Naive thymus-derived CD4-positive, alpha-beta T cell (primary cell): ENCODE measurements at regions of chr21 and their contacts with region 1.

Region 1: GRCh38 chr21:36589355-36589971 is 109.5 kb upstream of the SIM2 start:
- DNase-seq: peak in 1 of 9 donors; percentile 25
- ATAC-seq: peak; percentile 41
- H3K4me3 ChIP-seq: no peak overlapping the region
- H3K4me3 Mint-ChIP-seq: no peak overlapping the region
- H3K27ac ChIP-seq: no peak overlapping the region
- H3K27ac Mint-ChIP-seq: peak overlapping the region in 1 of 9 donors; percentile 53
- H3K4me1 ChIP-seq: peaks cover 0 to 3% of the 10 kb centered on the region in 2 donors
- H3K4me1 Mint-ChIP-seq: peaks cover 0 to 17% (median 6%) of the 10 kb centered on the region in 7 donors
- H3K27me3 ChIP-seq: no peaks in the 10 kb centered on the region
- H3K27me3 Mint-ChIP-seq: peaks cover 0 to 9% (median 0%) of the 10 kb centered on the region in 5 donors

Region 2: GRCh38 chr21:36141513-36141925 is 447.9 kb before region 1 on chr21:
- CTCF ChIA-PET with region 1: no interaction called
- POLR2A ChIA-PET with region 1: no interaction called
- intact Hi-C with region 1: loop called in 1 of 2 experiments (anchors 1 kb)
- DNase-seq: peak; percentile 50 to 92 (median 84)
- ATAC-seq: peak; percentile 99
- H3K4me3 ChIP-seq: no peak overlapping the region
- H3K4me3 Mint-ChIP-seq: peak overlapping the region in 5 of 10 donors; percentile 1 to 15 (median 3)
- H3K27ac ChIP-seq: peak overlapping the region; percentile 74
- H3K27ac Mint-ChIP-seq: peak overlapping the region; percentile 16 to 92 (median 83)
- H3K4me1 ChIP-seq: peaks cover 18 to 19% of the 10 kb centered on the region in 2 donors
- H3K4me1 Mint-ChIP-seq: peaks cover 11 to 42% (median 39%) of the 10 kb centered on the region in 7 donors
- H3K27me3 ChIP-seq: no peaks in the 10 kb centered on the region
- H3K27me3 Mint-ChIP-seq: no peaks in the 10 kb centered on the region

Region 3: DNA sequence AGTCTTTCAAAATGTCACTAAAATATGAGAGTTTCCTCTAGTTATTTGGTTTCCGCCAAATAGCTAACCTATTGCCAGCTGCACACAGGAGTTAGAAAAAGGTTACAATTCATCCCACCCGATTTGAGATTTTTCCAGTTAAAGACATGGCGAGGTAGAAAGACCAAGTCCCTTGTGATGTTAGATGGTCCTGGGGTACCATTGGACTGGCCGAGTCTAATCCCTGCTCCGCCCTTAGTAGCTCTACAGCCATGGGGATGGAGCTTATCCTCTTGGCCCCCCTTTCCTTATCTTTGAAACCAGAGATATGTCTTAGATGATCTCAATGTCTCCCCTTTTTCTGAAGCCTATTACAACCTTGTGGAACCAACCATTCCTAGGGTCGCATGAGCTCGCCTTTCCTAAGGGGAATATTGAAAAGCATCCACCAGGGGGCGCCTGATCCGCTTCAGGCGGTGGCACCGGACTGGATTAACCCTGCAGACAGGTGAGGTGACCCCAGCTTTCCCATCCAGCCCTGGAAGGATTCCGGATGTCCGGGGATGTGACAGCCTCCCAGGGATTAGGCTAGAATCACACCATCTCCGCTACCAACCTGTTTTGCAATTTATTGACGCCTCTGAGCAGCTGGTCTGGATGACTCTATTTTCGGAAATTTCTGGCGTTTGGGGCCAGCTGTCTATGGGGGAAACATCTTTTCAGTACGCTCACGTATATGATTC is 41.2 kb after region 1 on chr21:
- CTCF ChIA-PET with region 1: interaction called, 12 read pairs
- POLR2A ChIA-PET with region 1: no interaction called
- intact Hi-C with region 1: loop called in 1 of 2 experiments (anchors 1 kb)
- DNase-seq: peak in 8 of 9 donors; percentile 14 to 57 (median 41)
- ATAC-seq: peak; percentile 54
- H3K4me3 ChIP-seq: no peak overlapping the region
- H3K4me3 Mint-ChIP-seq: no peak overlapping the region
- H3K27ac ChIP-seq: no peak overlapping the region
- H3K27ac Mint-ChIP-seq: no peak overlapping the region
- H3K4me1 ChIP-seq: no peaks in the 10 kb centered on the region
- H3K4me1 Mint-ChIP-seq: no peaks in the 10 kb centered on the region
- H3K27me3 ChIP-seq: no peaks in the 10 kb centered on the region
- H3K27me3 Mint-ChIP-seq: peaks cover 0 to 6% (median 3%) of the 10 kb centered on the region in 5 donors

Region 4: GRCh38 chr21:36706951-36707762 is 117.7 kb after region 1 on chr21:
- CTCF ChIA-PET with region 1: no interaction called
- POLR2A ChIA-PET with region 1: no interaction called
- intact Hi-C with region 1: loop called in 1 of 2 experiments (anchors 2 kb)
- DNase-seq: peak in 1 of 9 donors; percentile 18
- ATAC-seq: no peak
- H3K4me3 ChIP-seq: no peak overlapping the region
- H3K4me3 Mint-ChIP-seq: peak overlapping the region in 9 of 10 donors; percentile 51 to 84 (median 72)
- H3K27ac ChIP-seq: no peak overlapping the region
- H3K27ac Mint-ChIP-seq: no peak overlapping the region
- H3K4me1 ChIP-seq: peaks cover 0 to 31% of the 10 kb centered on the region in 2 donors
- H3K4me1 Mint-ChIP-seq: peaks cover 8 to 61% (median 51%) of the 10 kb centered on the region in 7 donors
- H3K27me3 ChIP-seq: peaks cover 0 to 36% of the 10 kb centered on the region in 2 donors
- H3K27me3 Mint-ChIP-seq: peaks cover 71 to 84% (median 80%) of the 10 kb centered on the region in 5 donors

Region 5: DNA sequence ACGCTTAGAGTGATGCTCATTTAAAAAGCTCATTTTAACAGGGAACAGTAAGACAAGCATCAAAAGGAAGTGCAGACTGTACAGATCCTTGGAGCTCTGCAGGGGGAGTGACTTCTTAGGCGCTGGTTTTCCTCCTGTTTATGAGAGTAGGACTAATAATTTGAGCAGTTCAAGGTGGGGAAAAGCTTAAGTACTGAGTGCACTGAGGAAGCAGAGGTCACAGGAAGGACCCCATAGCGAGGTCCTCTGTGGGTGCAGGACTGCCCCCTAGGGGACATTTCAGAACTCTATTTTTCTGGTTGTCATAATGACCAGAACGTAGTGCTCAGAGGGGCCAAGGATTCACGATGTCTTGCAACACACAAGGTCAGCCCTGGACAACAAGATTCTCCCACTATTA is 264.9 kb after region 1 on chr21:
- CTCF ChIA-PET with region 1: no interaction called
- POLR2A ChIA-PET with region 1: interaction called, 3 read pairs
- intact Hi-C with region 1: loop called in 1 of 2 experiments (anchors 1 kb)
- DNase-seq: peak in 3 of 9 donors; percentile 5 to 21 (median 13)
- ATAC-seq: no peak
- H3K4me3 ChIP-seq: no peak overlapping the region
- H3K4me3 Mint-ChIP-seq: no peak overlapping the region
- H3K27ac ChIP-seq: no peak overlapping the region
- H3K27ac Mint-ChIP-seq: peak overlapping the region in 1 of 9 donors; percentile 22
- H3K4me1 ChIP-seq: no peaks in the 10 kb centered on the region
- H3K4me1 Mint-ChIP-seq: peaks cover 0 to 16% (median 3%) of the 10 kb centered on the region in 7 donors
- H3K27me3 ChIP-seq: no peaks in the 10 kb centered on the region
- H3K27me3 Mint-ChIP-seq: no peaks in the 10 kb centered on the region

Region 6: DNA sequence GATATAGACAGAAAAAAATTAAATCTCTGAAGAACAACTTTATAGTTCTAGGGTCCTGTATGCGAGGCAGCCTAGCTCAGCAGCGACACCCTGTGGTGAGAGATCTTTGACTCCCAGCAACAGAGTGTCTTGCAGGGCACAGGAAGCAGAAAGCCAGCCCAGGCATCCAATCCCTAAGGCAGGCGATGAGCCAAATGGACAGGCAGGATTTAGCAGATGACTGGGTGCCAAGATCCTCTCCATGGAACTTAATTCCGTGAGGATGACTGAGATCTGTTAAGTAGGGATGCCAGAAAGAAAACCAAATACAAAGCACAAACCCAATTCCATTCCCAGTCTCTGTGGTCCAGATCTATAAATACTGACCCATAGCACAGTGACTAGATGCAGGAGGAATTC is 338.3 kb after region 1 on chr21:
- CTCF ChIA-PET with region 1: interaction called, 16 read pairs
- POLR2A ChIA-PET with region 1: no interaction called
- intact Hi-C with region 1: no loop called
- DNase-seq: peak; percentile 19 to 71 (median 60)
- ATAC-seq: peak; percentile 61
- H3K4me3 ChIP-seq: no peak overlapping the region
- H3K4me3 Mint-ChIP-seq: no peak overlapping the region
- H3K27ac ChIP-seq: no peak overlapping the region
- H3K27ac Mint-ChIP-seq: no peak overlapping the region
- H3K4me1 ChIP-seq: no peaks in the 10 kb centered on the region
- H3K4me1 Mint-ChIP-seq: peaks cover 0 to 17% (median 11%) of the 10 kb centered on the region in 7 donors
- H3K27me3 ChIP-seq: no peaks in the 10 kb centered on the region
- H3K27me3 Mint-ChIP-seq: no peaks in the 10 kb centered on the region

Region 7: DNA sequence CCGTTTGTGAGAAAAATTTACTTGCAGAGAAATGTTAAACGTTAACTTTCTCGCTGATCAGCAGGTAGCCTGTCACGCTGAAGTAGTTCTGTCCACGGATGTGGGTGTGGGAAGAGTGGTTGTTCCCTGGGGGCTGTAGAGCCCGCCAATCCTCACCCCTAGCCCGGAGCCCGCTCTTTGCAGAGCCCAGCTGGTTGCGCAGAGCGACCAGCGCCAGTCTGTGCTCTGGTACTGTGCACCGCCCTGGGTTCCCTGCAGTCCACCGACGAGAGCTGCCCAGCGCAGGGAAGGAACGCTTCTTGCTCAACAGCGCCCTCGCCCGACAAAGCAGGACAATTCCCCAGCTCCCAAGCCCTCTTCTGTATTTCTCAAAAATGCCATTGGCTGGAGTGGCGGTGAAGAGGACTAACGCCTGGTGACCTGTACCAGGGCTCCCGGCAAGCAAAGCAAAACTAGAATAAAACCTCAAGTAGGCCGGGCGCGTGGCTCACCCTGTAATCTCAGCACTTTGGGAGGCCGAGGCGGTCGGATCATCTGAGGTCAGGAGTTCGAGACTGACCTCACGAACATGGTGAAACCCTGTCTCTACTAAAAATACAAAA is 420.4 kb after region 1 on chr21:
- CTCF ChIA-PET with region 1: no interaction called
- POLR2A ChIA-PET with region 1: no interaction called
- intact Hi-C with region 1: loop called in 1 of 2 experiments (anchors 1 kb)
- DNase-seq: peak; percentile 42 to 77 (median 71)
- ATAC-seq: peak; percentile 94
- H3K4me3 ChIP-seq: no peak overlapping the region
- H3K4me3 Mint-ChIP-seq: peak overlapping the region; percentile 45 to 80 (median 69)
- H3K27ac ChIP-seq: no peak overlapping the region
- H3K27ac Mint-ChIP-seq: no peak overlapping the region
- H3K4me1 ChIP-seq: peaks cover 4 to 7% of the 10 kb centered on the region in 2 donors
- H3K4me1 Mint-ChIP-seq: peaks cover 0 to 19% (median 16%) of the 10 kb centered on the region in 7 donors
- H3K27me3 ChIP-seq: no peaks in the 10 kb centered on the region
- H3K27me3 Mint-ChIP-seq: peaks cover 43 to 51% (median 47%) of the 10 kb centered on the region in 5 donors